Left ventricle myocardium superior (tissue), 1 donor: ENCODE measurements at regions of chr9 and their contacts with region 1.

Region 1: GRCh38 chr9:130461218-130461630 is 16.5 kb downstream of the ASS1 start:
- DNase-seq: peak; percentile 83
- ATAC-seq: peak; percentile 61

Region 2: DNA sequence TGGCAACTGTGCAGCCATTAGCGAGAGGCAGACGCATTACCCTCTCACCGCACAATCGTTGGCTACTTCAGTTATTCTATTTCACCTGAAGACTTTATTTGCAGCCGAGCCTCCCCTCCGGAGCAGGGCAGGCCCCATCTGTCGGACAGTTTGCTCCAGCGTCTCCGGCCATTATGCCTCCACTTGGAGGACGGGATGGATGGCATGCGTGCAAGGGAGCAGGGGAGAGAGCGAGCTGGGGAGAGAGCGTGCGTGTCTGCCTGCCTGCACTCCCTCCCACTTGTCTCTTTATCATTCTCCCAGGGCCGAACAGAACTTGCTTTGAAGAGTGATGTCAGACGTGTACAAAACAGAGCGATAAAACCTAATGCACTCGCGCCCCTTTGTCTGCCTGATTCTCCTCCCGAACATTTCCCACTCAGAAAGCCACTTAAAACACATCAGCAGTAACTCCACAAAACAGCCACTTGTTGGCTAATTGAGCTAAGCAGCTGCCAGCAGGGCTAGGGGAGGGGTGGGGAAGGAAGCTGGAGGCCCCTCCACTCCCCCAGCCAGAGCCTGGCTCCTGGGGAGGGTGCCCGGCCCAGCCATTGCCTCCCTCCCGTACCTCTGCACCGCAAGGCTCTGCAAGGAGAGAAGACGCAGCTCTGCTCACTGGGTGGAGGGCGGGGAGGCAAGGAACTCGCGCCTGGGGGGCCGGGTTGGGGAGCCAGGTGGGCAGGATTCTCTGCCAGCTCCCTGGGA is 74.8 kb after region 1 on chr9:
- intact Hi-C with region 1: no loop called
- DNase-seq: peak; percentile 49
- ATAC-seq: peak; percentile 88

Region 3: DNA sequence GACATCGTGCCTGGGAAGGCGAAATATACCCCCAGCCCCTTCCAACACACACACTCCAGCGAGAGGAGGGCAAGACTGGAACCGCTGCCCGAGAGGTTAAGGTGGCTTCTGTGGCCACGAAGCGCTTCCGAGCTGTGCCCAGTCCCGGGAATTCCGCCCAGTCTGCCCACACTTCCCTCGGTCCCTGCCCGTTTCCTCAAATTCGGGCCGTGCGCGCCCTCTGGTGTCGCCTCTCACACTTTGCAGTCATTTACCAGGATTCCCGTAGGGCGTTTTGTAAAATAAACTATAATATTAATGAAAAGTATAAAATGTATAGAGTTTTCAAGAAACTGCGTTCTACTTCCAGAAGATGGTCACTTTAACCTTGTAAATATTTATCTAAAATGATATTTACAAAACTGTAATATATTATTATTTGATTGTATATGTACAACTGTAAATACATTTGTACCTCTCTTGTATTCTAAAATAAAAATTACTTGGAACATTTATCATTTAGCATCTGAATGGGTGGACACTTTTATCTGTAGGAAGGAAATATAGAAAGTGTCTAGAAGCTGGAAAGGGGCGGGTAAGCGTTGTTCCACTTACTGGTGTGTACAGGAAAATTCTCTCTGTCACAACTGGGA is 221.4 kb after region 1 on chr9:
- intact Hi-C with region 1: loop called (anchors 5 kb)
- DNase-seq: peak; percentile 85
- ATAC-seq: peak; percentile 82